Naive thymus-derived CD4-positive, alpha-beta T cell (primary cell): ENCODE measurements at regions of chr20 and their contacts with region 1.

Region 1: GRCh38 chr20:64079273-64080012 is at the start of gene RGS19:
- DNase-seq: peak; percentile 59 to 86 (median 65)
- ATAC-seq: peak; percentile 63
- H3K4me3 ChIP-seq: peak within 1 kb of the TSS; percentile 89
- H3K4me3 Mint-ChIP-seq: peak within 1 kb of the TSS; percentile 81 to 98 (median 92)
- H3K27ac ChIP-seq: peak within 1 kb of the TSS; percentile 79
- H3K27ac Mint-ChIP-seq: peak within 1 kb of the TSS; percentile 78 to 94 (median 85)
- H3K4me1 ChIP-seq: peaks cover 22 to 34% of the 10 kb centered on the region in 2 donors
- H3K4me1 Mint-ChIP-seq: peaks cover 21 to 53% (median 39%) of the 10 kb centered on the region in 7 donors
- H3K27me3 ChIP-seq: no peaks in the 10 kb centered on the region
- H3K27me3 Mint-ChIP-seq: peaks cover 0 to 18% (median 0%) of the 10 kb centered on the region in 5 donors
- total RNA-seq, gene RGS19: 21.8 to 93.4 (median 23.6) TPM

Region 2: DNA sequence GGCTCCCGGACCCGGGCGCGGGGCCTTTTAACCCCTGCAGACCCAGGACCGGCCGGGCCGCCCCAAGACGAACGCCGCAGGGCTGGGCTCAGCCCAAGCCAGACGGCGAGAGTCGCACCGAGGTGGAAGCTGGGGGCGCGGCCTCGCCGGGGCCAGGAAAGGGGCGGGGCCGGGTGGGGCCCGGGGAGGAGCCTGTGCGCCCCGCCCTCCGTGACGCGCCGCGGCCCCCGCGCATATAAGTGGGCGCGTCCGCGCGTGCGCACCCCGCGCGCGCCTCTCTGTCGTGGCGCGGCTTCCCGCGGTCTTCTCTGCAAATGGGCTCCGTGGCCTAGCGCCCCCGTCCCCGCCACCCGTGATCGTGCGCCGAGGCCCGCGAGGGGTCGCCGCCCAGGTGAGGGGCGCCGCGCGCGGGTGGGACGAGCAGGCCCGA is 558.9 kb before region 1 on chr20 and contains the start of gene PPDPF:
- CTCF ChIA-PET with region 1: no interaction called
- POLR2A ChIA-PET with region 1: interaction called, 3 read pairs
- intact Hi-C with region 1: loop called in 1 of 2 experiments (anchors 1 kb)
- DNase-seq: peak; percentile 76 to 92 (median 84)
- ATAC-seq: peak; percentile 96
- H3K4me3 ChIP-seq: peak within 1 kb of the TSS; percentile 86
- H3K4me3 Mint-ChIP-seq: peak within 1 kb of the TSS; percentile 65 to 89 (median 81)
- H3K27ac ChIP-seq: peak within 1 kb of the TSS; percentile 88
- H3K27ac Mint-ChIP-seq: peak within 1 kb of the TSS in 7 of 9 donors; percentile 51 to 88 (median 79)
- H3K4me1 ChIP-seq: peaks cover 11 to 14% of the 10 kb centered on the region in 2 donors
- H3K4me1 Mint-ChIP-seq: peaks cover 4 to 22% (median 9%) of the 10 kb centered on the region in 7 donors
- H3K27me3 ChIP-seq: no peaks in the 10 kb centered on the region
- H3K27me3 Mint-ChIP-seq: peaks cover 0 to 7% (median 0%) of the 10 kb centered on the region in 5 donors
- total RNA-seq, gene PPDPF: 138 to 225 (median 184) TPM

Region 3: DNA sequence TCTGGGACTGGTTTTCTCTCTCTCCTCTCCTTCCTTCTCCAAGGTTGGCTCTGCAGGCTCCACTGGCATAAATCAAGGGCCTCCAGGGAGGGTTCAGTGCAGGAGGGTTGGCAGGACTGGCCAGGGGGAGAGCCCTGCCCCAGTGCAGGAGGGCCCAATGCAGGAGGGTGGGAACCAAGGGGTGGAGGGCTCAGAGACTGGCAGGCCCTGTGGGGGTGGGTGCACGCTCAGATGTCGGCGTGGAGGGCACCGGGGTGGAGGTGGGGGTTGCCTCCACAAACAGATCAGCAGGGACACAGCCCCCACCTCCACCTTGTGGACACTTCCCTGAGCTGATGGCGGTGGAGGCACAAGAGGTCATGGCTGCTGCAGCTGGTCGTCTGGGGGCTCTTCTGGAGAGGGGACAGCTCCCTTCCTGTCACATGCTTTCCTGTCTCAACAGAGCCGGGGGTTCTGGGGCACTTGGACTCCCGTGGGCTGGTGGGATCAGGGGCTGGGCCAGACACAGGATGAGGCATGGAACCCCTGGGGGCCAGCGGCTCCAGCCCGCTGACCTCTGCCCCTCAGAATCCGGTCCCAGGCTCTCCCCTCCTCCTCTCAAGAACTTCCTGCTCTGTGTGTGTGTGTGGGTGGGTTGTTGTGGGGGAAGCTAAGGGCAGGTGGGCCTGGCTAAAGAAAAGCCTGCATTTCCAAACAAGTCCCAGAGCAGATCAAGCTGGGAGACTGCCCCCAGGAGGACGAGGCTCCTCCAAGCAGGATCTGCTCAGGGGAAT is 220.9 kb before region 1 on chr20:
- CTCF ChIA-PET with region 1: no interaction called
- POLR2A ChIA-PET with region 1: no interaction called
- intact Hi-C with region 1: no loop called
- DNase-seq: no peak
- ATAC-seq: peak; percentile 5
- H3K4me3 ChIP-seq: peak overlapping the region; percentile 17
- H3K4me3 Mint-ChIP-seq: peak overlapping the region in 9 of 10 donors; percentile 14 to 74 (median 57)
- H3K27ac ChIP-seq: peak overlapping the region; percentile 44
- H3K27ac Mint-ChIP-seq: peak overlapping the region; percentile 46 to 87 (median 69)
- H3K4me1 ChIP-seq: peaks cover 19 to 30% of the 10 kb centered on the region in 2 donors
- H3K4me1 Mint-ChIP-seq: peaks cover 16 to 34% (median 32%) of the 10 kb centered on the region in 7 donors
- H3K27me3 ChIP-seq: no peaks in the 10 kb centered on the region
- H3K27me3 Mint-ChIP-seq: no peaks in the 10 kb centered on the region

Region 4: GRCh38 chr20:64062596-64063388 is 16.7 kb before region 1 on chr20 and contains the start of gene TCEA2:
- CTCF ChIA-PET with region 1: interaction called, 4 read pairs
- POLR2A ChIA-PET with region 1: interaction called, 83 read pairs
- intact Hi-C with region 1: loop called (anchors 1 kb)
- DNase-seq: peak; percentile 85 to 95 (median 90)
- ATAC-seq: peak; percentile 97
- H3K4me3 ChIP-seq: peak within 1 kb of the TSS; percentile 56
- H3K4me3 Mint-ChIP-seq: peak within 1 kb of the TSS; percentile 83 to 95 (median 88)
- H3K27ac ChIP-seq: peak within 1 kb of the TSS; percentile 74
- H3K27ac Mint-ChIP-seq: peak within 1 kb of the TSS; percentile 69 to 95 (median 79)
- H3K4me1 ChIP-seq: peaks cover 23 to 40% of the 10 kb centered on the region in 2 donors
- H3K4me1 Mint-ChIP-seq: peaks cover 30 to 54% (median 37%) of the 10 kb centered on the region in 7 donors
- H3K27me3 ChIP-seq: no peaks in the 10 kb centered on the region
- H3K27me3 Mint-ChIP-seq: no peaks in the 10 kb centered on the region
- total RNA-seq, gene TCEA2: 35.5 to 73.2 (median 47.3) TPM

Region 5: DNA sequence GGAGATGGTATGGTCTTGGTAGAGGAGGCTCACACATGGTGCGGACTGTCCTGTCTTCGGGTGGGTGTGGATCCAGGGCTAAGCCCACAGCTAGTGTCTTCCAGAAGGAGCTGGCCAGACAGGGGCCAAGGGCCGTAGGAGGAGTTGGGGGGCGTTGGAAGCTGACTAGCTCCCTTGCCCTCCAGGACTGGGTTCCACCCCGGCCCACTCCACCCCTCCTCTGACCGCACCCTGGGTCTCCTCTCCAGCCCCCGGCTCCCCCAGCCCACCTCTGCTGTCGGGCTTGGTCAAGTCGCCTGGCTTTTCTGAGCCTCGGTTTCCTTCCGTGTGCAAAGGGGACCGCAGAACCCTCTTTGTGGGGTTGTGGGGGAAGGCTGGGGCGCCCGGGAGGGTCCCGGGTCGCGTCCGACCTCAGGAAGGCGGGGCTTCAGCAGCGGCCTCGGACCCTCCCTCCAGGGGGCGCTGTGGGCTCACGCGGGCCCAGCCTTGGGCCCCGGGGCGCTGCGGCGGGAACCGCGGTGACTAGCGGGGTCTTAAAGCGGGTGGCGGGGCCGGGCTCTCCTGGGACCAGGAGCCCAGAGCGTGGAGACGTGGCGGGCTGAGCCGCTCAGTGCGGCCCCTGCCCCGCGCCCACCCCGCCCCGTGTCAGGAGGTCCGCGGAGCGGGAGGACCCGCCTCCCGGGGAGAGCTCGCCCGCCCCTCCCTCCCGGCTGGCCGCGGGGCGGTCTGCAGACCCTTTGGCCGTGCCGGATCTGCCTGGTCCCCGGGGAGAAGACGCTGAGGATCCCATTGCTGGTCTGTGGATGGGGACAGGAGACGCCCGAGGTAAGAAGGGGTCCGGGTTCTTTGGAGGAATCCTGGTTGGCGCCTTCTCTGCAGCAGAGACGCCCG is 22.5 kb after region 1 on chr20:
- CTCF ChIA-PET with region 1: interaction called, 5 read pairs
- POLR2A ChIA-PET with region 1: interaction called, 9 read pairs
- intact Hi-C with region 1: loop called in 1 of 2 experiments (anchors 2 kb)
- DNase-seq: peak in 8 of 9 donors; percentile 44 to 84 (median 66)
- ATAC-seq: peak; percentile 87
- H3K4me3 ChIP-seq: peak overlapping the region; percentile 24
- H3K4me3 Mint-ChIP-seq: peak overlapping the region in 9 of 10 donors; percentile 2 to 73 (median 48)
- H3K27ac ChIP-seq: no peak overlapping the region
- H3K27ac Mint-ChIP-seq: no peak overlapping the region
- H3K4me1 ChIP-seq: peaks cover 10 to 13% of the 10 kb centered on the region in 2 donors
- H3K4me1 Mint-ChIP-seq: peaks cover 7 to 22% (median 10%) of the 10 kb centered on the region in 7 donors
- H3K27me3 ChIP-seq: peaks cover 0 to 4% of the 10 kb centered on the region in 2 donors
- H3K27me3 Mint-ChIP-seq: peaks cover 4 to 23% (median 10%) of the 10 kb centered on the region in 5 donors

Region 6: GRCh38 chr20:64119681-64120341 is 40.4 kb after region 1 on chr20:
- CTCF ChIA-PET with region 1: interaction called, 55 read pairs
- POLR2A ChIA-PET with region 1: interaction called, 11 read pairs
- intact Hi-C with region 1: loop called in 1 of 2 experiments (anchors 1 kb)
- DNase-seq: peak in 3 of 9 donors; percentile 2 to 24 (median 14)
- ATAC-seq: peak; percentile 18
- H3K4me3 ChIP-seq: peak overlapping the region; percentile 36
- H3K4me3 Mint-ChIP-seq: peak overlapping the region; percentile 39 to 80 (median 73)
- H3K27ac ChIP-seq: peak overlapping the region; percentile 22
- H3K27ac Mint-ChIP-seq: peak overlapping the region; percentile 69 to 85 (median 78)
- H3K4me1 ChIP-seq: peaks cover 5 to 9% of the 10 kb centered on the region in 2 donors
- H3K4me1 Mint-ChIP-seq: peaks cover 0 to 10% (median 8%) of the 10 kb centered on the region in 7 donors
- H3K27me3 ChIP-seq: no peaks in the 10 kb centered on the region
- H3K27me3 Mint-ChIP-seq: peaks cover 0 to 28% (median 0%) of the 10 kb centered on the region in 5 donors

Region 7: GRCh38 chr20:64255361-64256281 is 176.2 kb after region 1 on chr20 and contains the start of gene PCMTD2:
- CTCF ChIA-PET with region 1: no interaction called
- POLR2A ChIA-PET with region 1: interaction called, 3 read pairs
- intact Hi-C with region 1: loop called in 1 of 2 experiments (anchors 5 kb)
- DNase-seq: peak; percentile 78 to 97 (median 88)
- ATAC-seq: peak; percentile 92
- H3K4me3 ChIP-seq: peak within 1 kb of the TSS; percentile 71
- H3K4me3 Mint-ChIP-seq: peak within 1 kb of the TSS; percentile 84 to 100 (median 94)
- H3K27ac ChIP-seq: peak within 1 kb of the TSS; percentile 92
- H3K27ac Mint-ChIP-seq: peak within 1 kb of the TSS; percentile 87 to 100 (median 97)
- H3K4me1 ChIP-seq: peaks cover 30 to 49% of the 10 kb centered on the region in 2 donors
- H3K4me1 Mint-ChIP-seq: peaks cover 46 to 55% (median 53%) of the 10 kb centered on the region in 7 donors
- H3K27me3 ChIP-seq: no peaks in the 10 kb centered on the region
- H3K27me3 Mint-ChIP-seq: peaks cover 0 to 21% (median 6%) of the 10 kb centered on the region in 5 donors
- total RNA-seq, gene PCMTD2: 67.2 to 229 (median 103) TPM